CD8-positive, alpha-beta T cell (primary cell): ENCODE measurements at regions of chr5 and their contacts with region 1.

Region 1: GRCh38 chr5:65102828-65103711 is 334.3 kb downstream of the CWC27 start:
- DNase-seq: peak; percentile 26 to 85 (median 59)
- ATAC-seq: peak; percentile 75
- H3K4me3 ChIP-seq: peak overlapping the region; percentile 64 to 78
- H3K4me3 Mint-ChIP-seq: peak overlapping the region; percentile 88
- H3K27ac ChIP-seq: peak overlapping the region; percentile 77 to 83
- H3K27ac Mint-ChIP-seq: peak overlapping the region; percentile 95
- H3K4me1 ChIP-seq: peaks cover 24% of the 10 kb centered on the region
- H3K4me1 Mint-ChIP-seq: peaks cover 43% of the 10 kb centered on the region
- H3K27me3 ChIP-seq: no peaks in the 10 kb centered on the region
- H3K27me3 Mint-ChIP-seq: no peaks in the 10 kb centered on the region
- CTCF ChIP-seq: no peak

Region 2: DNA sequence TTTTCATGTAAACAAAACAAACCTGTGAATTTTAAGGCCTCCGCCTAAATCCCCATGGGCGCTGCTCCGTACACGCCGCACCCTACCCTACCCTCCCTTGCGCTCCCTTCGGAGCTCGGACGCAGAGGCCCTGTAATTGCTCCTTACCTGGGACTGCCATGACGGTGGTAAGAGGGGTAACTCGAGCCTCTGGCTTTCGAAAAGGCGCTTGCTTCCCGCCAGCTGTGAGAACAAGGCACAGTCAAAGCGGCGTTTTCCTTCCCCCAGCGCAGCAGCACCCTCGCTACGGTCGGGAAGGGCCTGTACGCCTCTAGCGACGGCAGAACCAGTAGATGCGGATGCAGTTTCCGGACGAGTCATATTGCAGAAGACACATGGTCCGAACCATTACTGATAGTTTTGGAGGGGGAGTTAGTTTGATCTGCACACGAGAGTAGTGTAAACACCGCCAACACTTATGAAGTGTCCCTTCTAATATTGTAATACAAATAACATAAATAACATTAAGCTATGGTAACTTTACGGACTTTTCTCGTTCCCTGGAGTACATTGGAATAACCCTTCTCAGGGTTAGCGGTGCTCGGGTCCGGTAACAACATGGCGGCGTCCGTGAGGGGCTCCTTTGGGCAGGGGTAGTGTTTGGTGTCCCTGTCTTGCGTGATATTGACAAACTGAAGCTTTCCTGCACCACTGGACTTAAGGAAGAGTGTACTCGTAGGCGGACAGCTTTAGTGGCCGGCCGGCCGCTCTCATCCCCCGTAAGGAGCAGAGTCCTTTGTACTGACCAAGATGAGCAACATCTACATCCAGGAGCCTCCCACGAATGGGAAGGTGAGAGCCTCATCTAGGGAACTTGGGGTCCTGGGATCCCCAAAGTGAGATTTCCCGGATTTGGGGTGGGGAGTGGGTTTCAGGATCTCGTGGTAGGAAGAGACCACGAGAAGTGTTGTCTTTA is 334.4 kb before region 1 on chr5 and contains the starts of genes CWC27 and SREK1IP1:
- CTCF ChIA-PET with region 1: no interaction called
- POLR2A ChIA-PET with region 1: no interaction called
- intact Hi-C with region 1: loop called in 1 of 2 experiments (anchors 5 kb)
- DNase-seq: peak; percentile 63 to 92 (median 80)
- ATAC-seq: peak; percentile 96
- H3K4me3 ChIP-seq: peak within 1 kb of the TSS; percentile 78 to 93
- H3K4me3 Mint-ChIP-seq: peak within 1 kb of the TSS; percentile 100
- H3K27ac ChIP-seq: peak within 1 kb of the TSS; percentile 85 to 90
- H3K27ac Mint-ChIP-seq: peak within 1 kb of the TSS; percentile 97
- H3K4me1 ChIP-seq: peaks cover 39% of the 10 kb centered on the region
- H3K4me1 Mint-ChIP-seq: peaks cover 66% of the 10 kb centered on the region
- H3K27me3 ChIP-seq: no peaks in the 10 kb centered on the region
- H3K27me3 Mint-ChIP-seq: no peaks in the 10 kb centered on the region
- CTCF ChIP-seq: no peak
- total RNA-seq, gene CWC27: 15.5 to 16.6 TPM
- total RNA-seq, gene SREK1IP1: 20.4 to 26.5 TPM

Region 3: DNA sequence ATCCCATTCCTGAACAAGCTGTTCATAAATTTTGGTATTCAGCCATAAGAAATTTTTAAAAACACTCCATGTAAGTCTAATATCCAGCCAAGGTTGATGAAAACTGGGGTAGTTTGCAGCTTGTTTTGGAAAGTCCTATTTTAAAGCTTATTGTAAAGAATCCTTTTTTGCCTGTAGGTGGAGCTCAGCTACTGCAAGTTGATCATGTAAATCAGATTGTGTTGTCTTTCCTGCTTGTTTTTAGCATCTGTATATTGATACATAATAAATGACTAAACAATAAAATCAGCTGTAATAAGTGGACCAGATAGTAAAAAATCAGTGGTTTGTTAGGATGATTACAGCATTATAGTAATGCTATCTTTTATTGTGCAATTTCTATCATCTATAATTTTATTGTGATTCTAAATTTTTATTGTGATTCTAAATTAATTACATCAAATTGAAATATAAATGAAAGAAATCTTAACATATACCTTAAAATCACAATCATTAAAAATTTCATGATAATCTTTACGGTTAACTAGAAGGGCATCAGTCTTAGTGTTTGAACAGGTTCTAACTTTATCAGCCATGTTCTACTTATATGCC is 291.9 kb before region 1 on chr5:
- CTCF ChIA-PET with region 1: interaction called, 3 read pairs
- POLR2A ChIA-PET with region 1: no interaction called
- intact Hi-C with region 1: loop called in 1 of 2 experiments (anchors 10 kb)
- DNase-seq: peak in 3 of 9 experiments; percentile 4 to 63 (median 52)
- ATAC-seq: no peak
- H3K4me3 ChIP-seq: no peak overlapping the region
- H3K4me3 Mint-ChIP-seq: no peak overlapping the region
- H3K27ac ChIP-seq: no peak overlapping the region
- H3K27ac Mint-ChIP-seq: no peak overlapping the region
- H3K4me1 ChIP-seq: no peaks in the 10 kb centered on the region
- H3K4me1 Mint-ChIP-seq: no peaks in the 10 kb centered on the region
- H3K27me3 ChIP-seq: no peaks in the 10 kb centered on the region
- H3K27me3 Mint-ChIP-seq: no peaks in the 10 kb centered on the region
- CTCF ChIP-seq: peak; percentile 65

Region 4: DNA sequence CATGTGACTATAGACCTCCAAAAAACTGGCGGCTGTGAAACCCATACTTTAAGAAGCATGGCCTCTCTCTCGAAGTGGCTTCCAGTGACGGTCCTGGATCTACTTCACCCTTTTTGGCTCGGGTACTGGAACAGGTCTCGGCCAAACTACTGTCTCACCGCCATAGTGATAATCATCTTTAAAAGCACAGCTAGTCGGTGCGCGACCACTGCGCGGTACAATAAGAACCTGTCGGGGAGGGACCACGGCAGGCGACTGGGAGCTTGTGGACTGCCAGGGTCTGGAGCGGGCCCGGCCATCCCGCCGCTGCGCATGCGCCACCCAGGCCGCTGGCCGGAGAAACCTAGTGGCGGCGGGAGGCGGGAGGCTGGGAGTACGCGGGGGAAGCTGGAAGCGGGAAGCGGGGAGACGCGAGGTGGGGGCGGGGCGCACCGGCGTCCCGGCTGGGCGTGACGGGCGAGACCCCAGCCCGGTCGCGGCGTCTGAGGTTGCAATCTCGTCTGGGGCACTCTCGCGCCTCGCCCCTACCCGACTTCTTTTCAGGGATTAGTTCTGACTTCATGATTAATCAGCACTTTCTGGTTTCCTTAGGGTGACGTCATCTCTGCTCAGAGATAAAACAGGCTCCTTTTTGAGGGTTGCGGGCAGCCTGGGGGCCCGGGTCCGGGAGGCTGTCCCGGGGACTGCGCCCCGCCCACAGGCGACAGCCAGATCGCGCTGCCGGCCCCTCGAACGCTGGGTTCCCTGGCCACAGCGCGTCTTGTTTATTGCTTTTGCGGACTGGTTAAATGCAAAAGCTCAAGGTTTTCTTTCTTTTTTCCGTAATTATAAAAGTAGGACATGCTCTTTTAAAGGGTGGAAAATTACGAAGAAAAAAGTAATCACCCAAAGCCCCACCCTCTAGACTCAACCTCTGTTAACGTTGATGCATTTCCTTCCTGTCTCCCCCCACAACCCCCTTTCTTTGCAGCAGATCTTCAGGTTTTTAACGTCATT is 67.6 kb before region 1 on chr5:
- CTCF ChIA-PET with region 1: interaction called, 4 read pairs
- POLR2A ChIA-PET with region 1: interaction called, 15 read pairs
- intact Hi-C with region 1: loop called (anchors 1 to 2 kb)
- DNase-seq: peak; percentile 62 to 95 (median 83)
- ATAC-seq: peak; percentile 76
- H3K4me3 ChIP-seq: peak overlapping the region; percentile 57 to 60
- H3K4me3 Mint-ChIP-seq: peak overlapping the region; percentile 95
- H3K27ac ChIP-seq: peak overlapping the region; percentile 83 to 96
- H3K27ac Mint-ChIP-seq: peak overlapping the region; percentile 89
- H3K4me1 ChIP-seq: peaks cover 20% of the 10 kb centered on the region
- H3K4me1 Mint-ChIP-seq: peaks cover 32% of the 10 kb centered on the region
- H3K27me3 ChIP-seq: no peaks in the 10 kb centered on the region
- H3K27me3 Mint-ChIP-seq: no peaks in the 10 kb centered on the region
- CTCF ChIP-seq: no peak

Region 5: GRCh38 chr5:65076251-65076869 is 26.7 kb before region 1 on chr5:
- CTCF ChIA-PET with region 1: interaction called, 3 read pairs
- POLR2A ChIA-PET with region 1: no interaction called
- intact Hi-C with region 1: loop called in 1 of 2 experiments (anchors 2 kb)
- DNase-seq: peak in 8 of 9 experiments; percentile 21 to 81 (median 55)
- ATAC-seq: peak; percentile 97
- H3K4me3 ChIP-seq: no peak overlapping the region
- H3K4me3 Mint-ChIP-seq: no peak overlapping the region
- H3K27ac ChIP-seq: no peak overlapping the region
- H3K27ac Mint-ChIP-seq: no peak overlapping the region
- H3K4me1 ChIP-seq: no peaks in the 10 kb centered on the region
- H3K4me1 Mint-ChIP-seq: peaks cover 5% of the 10 kb centered on the region
- H3K27me3 ChIP-seq: no peaks in the 10 kb centered on the region
- H3K27me3 Mint-ChIP-seq: no peaks in the 10 kb centered on the region
- CTCF ChIP-seq: peak; percentile 55

Region 6: GRCh38 chr5:65562731-65563701 is 459.9 kb after region 1 on chr5 and contains the starts of genes CENPK and PPWD1:
- CTCF ChIA-PET with region 1: no interaction called
- POLR2A ChIA-PET with region 1: interaction called, 9 read pairs
- intact Hi-C with region 1: loop called in 1 of 2 experiments (anchors 5 kb)
- DNase-seq: peak; percentile 83 to 98 (median 95)
- ATAC-seq: peak; percentile 97
- H3K4me3 ChIP-seq: peak within 1 kb of the TSS; percentile 74 to 82
- H3K4me3 Mint-ChIP-seq: peak within 1 kb of the TSS; percentile 100
- H3K27ac ChIP-seq: peak within 1 kb of the TSS; percentile 97 to 98
- H3K27ac Mint-ChIP-seq: peak within 1 kb of the TSS; percentile 100
- H3K4me1 ChIP-seq: peaks cover 37% of the 10 kb centered on the region
- H3K4me1 Mint-ChIP-seq: peaks cover 42% of the 10 kb centered on the region
- H3K27me3 ChIP-seq: no peaks in the 10 kb centered on the region
- H3K27me3 Mint-ChIP-seq: no peaks in the 10 kb centered on the region
- CTCF ChIP-seq: no peak
- total RNA-seq, gene CENPK: 5.1 to 5.3 TPM
- total RNA-seq, gene PPWD1: 78.8 to 81.5 TPM

Region 7: DNA sequence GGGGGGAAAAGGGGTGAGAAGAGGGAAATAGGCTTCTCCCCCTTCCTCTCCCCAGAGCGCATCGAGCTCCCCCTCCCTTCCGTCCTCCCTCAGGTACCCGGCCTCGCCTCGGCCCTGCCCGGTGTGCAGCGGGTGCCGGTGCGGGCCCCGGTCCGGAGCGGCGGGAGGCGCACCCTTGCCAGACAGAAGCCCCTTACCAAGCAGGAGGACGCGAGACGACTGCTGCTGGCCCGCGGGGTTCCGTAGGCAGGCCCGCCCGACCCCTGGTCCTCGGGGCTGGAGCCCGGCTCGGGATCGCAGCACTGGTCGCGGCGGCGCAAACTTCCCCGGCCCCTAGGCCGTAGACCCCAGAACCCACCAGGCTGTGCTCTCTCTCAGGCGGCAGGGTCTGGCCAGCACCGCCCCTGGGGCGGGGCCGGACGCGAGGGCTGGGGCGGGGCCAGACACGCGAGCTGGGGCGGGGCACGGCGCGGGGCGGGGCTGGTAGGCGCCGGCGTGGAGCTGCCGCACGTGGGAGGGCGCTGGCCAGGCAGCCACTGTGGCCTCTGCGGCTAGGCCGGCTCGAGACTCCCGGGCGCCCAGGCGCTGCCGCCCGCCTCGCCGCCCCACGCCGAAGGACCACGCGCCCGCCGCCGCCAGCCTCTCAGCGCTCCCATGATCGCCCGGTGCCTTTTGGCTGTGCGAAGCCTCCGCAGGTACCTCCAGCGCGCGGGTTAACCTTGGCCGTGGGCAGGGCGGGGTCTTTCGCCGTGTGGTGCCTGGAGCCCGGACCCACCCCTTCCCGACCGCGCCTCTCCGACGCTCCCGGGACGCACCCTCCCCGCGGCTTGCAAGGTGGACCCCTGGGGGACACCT is 618.9 kb after region 1 on chr5 and contains the starts of genes NLN and SGTB:
- CTCF ChIA-PET with region 1: no interaction called
- POLR2A ChIA-PET with region 1: no interaction called
- intact Hi-C with region 1: loop called in 1 of 2 experiments (anchors 10 kb)
- DNase-seq: peak; percentile 72 to 90 (median 84)
- ATAC-seq: peak; percentile 91
- H3K4me3 ChIP-seq: peak within 1 kb of the TSS; percentile 82 to 86
- H3K4me3 Mint-ChIP-seq: peak within 1 kb of the TSS; percentile 89
- H3K27ac ChIP-seq: peak within 1 kb of the TSS; percentile 78 to 86
- H3K27ac Mint-ChIP-seq: peak within 1 kb of the TSS; percentile 94
- H3K4me1 ChIP-seq: peaks cover 44% of the 10 kb centered on the region
- H3K4me1 Mint-ChIP-seq: peaks cover 25% of the 10 kb centered on the region
- H3K27me3 ChIP-seq: no peaks in the 10 kb centered on the region
- H3K27me3 Mint-ChIP-seq: no peaks in the 10 kb centered on the region
- CTCF ChIP-seq: no peak
- total RNA-seq, gene NLN: 1.4 to 1.5 TPM
- total RNA-seq, gene SGTB: 77.9 to 79.5 TPM